ENCODE measurements at regions of chr11 and their contacts with region 1.

Region 1: DNA sequence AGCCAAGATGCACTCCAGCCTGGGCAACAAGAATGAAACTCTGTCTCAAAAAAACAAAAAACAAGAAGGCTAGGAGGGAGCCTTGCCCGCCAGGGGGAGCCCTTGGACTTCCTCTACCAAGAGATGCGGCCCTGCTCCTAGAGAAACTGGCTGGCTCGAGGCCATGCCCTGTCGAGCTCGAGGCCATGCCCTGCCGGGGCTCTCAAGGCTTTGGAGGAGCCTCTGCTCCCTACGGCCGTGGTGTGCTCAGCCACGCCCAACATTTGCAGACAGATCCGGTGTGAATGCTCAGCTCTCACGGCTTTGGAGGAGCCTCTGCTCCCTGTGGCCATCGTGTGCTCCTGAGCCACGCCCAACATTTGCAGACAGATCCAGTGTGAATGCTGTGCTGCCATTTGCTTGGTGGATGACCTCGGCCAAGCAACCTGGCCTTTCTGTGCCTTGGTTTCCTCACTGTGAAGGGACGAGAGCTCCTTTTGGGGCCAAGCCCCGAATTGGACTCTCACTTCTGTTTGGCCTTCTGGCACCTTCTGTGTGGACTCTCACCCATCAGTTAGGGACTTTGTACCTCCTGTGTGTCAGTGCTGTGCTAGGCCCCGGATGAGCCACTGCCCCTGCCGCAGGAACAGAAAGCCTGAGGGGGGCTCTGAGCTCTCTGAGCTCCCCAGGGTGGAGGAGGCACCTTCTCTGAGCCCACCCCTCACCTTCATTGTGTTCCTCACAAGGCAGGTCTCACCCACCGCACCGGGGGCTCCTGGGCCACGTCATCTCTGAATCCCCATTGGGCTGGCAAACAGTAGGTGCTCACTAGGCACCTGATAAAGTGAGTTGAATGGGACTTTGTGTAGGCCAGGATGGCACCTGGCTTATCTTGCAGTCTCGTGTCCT is 14.1 kb downstream of the C11orf24 start:
- DNase-seq: peak; percentile 84 to 92
- ATAC-seq: peak; percentile 77 to 90
- H3K4me3 ChIP-seq: no peak overlapping the region
- H3K27ac ChIP-seq: peak overlapping the region; percentile 54 to 64; a peak in 5 of 6 replicates
- H3K4me1 ChIP-seq: peaks cover 15% of the 10 kb centered on the region
- CTCF ChIP-seq: peak; percentile 88
- EP300 ChIP-seq: no peak
- POLR2A ChIP-seq: no peak
- RAD21 ChIP-seq: peak; percentile 93 to 95

Region 2: GRCh38 chr11:68053117-68053516 is 204.6 kb before region 1 on chr11:
- CTCF ChIA-PET with region 1: no interaction called
- POLR2A ChIA-PET with region 1: no interaction called
- DNase-seq: no peak
- ATAC-seq: peak; percentile 10 to 15; a peak in 3 of 6 replicates
- H3K4me3 ChIP-seq: no peak overlapping the region
- H3K27ac ChIP-seq: no peak overlapping the region
- H3K4me1 ChIP-seq: 0 out of 3 replicates have a peak, but pooled peaks cover 3% of the 10 kb centered on the region
- CTCF ChIP-seq: no peak
- EP300 ChIP-seq: no peak
- POLR2A ChIP-seq: no peak
- RAD21 ChIP-seq: no peak

Region 3: GRCh38 chr11:68235650-68236049 is 22.1 kb before region 1 on chr11:
- CTCF ChIA-PET with region 1: interaction called, 11 read pairs
- POLR2A ChIA-PET with region 1: no interaction called
- DNase-seq: no peak
- ATAC-seq: no peak
- H3K4me3 ChIP-seq: no peak overlapping the region
- H3K27ac ChIP-seq: no peak overlapping the region
- H3K4me1 ChIP-seq: no peaks in the 10 kb centered on the region
- CTCF ChIP-seq: no peak
- EP300 ChIP-seq: no peak
- POLR2A ChIP-seq: no peak
- RAD21 ChIP-seq: no peak

Region 4: GRCh38 chr11:68271781-68272608 is 14.3 kb after region 1 on chr11 and contains the start of gene C11orf24:
- CTCF ChIA-PET with region 1: interaction called, 56 read pairs
- POLR2A ChIA-PET with region 1: interaction called, 13 read pairs
- DNase-seq: peak; percentile 95 to 96
- ATAC-seq: peak; percentile 91 to 96
- H3K4me3 ChIP-seq: peak within 1 kb of the TSS; percentile 87
- H3K27ac ChIP-seq: peak within 1 kb of the TSS; percentile 97 to 98
- H3K4me1 ChIP-seq: peaks cover 33% of the 10 kb centered on the region
- CTCF ChIP-seq: no peak
- EP300 ChIP-seq: no peak
- POLR2A ChIP-seq: peak; percentile 85
- RAD21 ChIP-seq: no peak
- polyA plus RNA-seq, gene C11orf24: 29.4 and 30.6 TPM in 2 replicates

Region 5: DNA sequence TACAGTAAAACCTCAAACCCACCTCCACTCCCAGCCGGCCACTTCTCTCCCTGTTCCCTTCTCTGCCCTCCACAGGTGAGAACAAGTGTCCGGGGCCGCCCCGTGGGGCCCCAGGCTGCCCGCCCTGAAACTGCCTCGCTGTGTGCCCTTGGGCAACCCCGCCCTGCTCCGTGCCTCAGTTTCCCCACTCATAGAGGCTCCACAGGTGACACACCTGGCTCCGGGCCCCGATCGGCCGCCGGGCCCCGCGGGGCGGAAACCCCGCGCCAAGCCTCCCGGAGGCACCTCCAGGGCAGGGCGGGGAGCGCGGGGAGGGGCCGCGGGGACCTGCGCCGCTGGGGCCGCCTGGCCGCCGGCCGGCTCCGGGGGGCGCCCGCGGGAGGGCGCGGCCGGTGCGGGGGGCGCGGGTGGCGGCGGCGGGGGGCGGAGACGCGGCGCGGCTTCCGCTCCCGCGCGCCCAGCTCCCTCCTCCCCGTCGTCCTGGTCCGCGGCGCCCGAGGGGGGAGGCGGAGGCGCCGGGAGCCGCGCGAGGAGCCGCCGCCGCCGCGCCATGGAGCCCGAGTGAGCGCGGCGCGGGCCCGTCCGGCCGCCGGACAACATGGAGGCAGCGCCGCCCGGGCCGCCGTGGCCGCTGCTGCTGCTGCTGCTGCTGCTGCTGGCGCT is 54.5 kb after region 1 on chr11 and contains the start of gene LRP5:
- CTCF ChIA-PET with region 1: interaction called, 11 read pairs
- POLR2A ChIA-PET with region 1: no interaction called
- DNase-seq: no peak
- ATAC-seq: peak in 1 of 2 experiments; percentile 22; a peak in 3 of 6 replicates
- H3K4me3 ChIP-seq: peak within 1 kb of the TSS; percentile 91
- H3K27ac ChIP-seq: peak within 1 kb of the TSS; percentile 90 to 99
- H3K4me1 ChIP-seq: peaks cover 32% of the 10 kb centered on the region
- CTCF ChIP-seq: peak; percentile 8; the same call in 1 of the 3 replicates
- EP300 ChIP-seq: no peak
- POLR2A ChIP-seq: peak; percentile 25; the same call in 1 of the 2 replicates
- RAD21 ChIP-seq: no peak
- polyA plus RNA-seq, gene LRP5: 10.9 and 15.9 TPM in 2 replicates

Region 6: DNA sequence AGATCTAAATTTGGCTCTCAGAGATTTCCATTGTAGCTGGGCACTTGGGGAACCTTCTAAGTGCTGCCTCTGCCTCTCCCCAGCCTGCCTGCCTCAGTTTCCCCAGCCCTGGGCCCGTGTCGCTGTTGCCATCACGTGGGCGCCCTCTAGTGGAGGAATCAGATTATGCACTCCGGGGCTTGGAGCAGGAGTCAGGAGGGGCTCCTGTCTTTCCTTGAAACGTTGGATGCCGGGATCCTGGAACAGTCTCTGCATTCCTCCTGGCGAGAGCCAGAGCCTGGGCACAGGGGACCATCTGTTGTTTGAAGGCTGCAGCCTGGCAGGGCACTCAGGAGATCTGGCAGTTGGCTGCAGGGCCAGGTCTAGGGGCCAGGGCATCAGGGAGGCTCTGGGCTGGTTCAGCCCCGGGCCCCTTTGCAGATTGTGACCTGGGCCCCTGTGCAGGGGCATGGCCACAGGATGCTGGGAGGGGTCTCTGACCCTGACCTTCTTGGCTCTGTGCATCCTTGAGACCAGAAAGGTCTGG is 126.3 kb after region 1 on chr11:
- CTCF ChIA-PET with region 1: interaction called, 81 read pairs
- POLR2A ChIA-PET with region 1: interaction called, 3 read pairs
- DNase-seq: peak; percentile 60 to 62
- ATAC-seq: peak in 1 of 2 experiments; percentile 5; a peak in 2 of 6 replicates
- H3K4me3 ChIP-seq: no peak overlapping the region
- H3K27ac ChIP-seq: peak overlapping the region in 1 of 2 experiments; percentile 44; a peak in 2 of 6 replicates
- H3K4me1 ChIP-seq: peaks cover 43% of the 10 kb centered on the region
- CTCF ChIP-seq: peak; percentile 95
- EP300 ChIP-seq: no peak
- POLR2A ChIP-seq: no peak
- RAD21 ChIP-seq: peak; percentile 94 to 95

Region 7: GRCh38 chr11:68780829-68781228 is 523.1 kb after region 1 on chr11:
- CTCF ChIA-PET with region 1: no interaction called
- POLR2A ChIA-PET with region 1: no interaction called
- DNase-seq: peak in 1 of 2 experiments; percentile 24
- ATAC-seq: peak in 1 of 2 experiments; percentile 77; a peak in 3 of 6 replicates
- H3K4me3 ChIP-seq: no peak overlapping the region
- H3K27ac ChIP-seq: no peak overlapping the region
- H3K4me1 ChIP-seq: no peaks in the 10 kb centered on the region
- CTCF ChIP-seq: no peak
- EP300 ChIP-seq: no peak
- POLR2A ChIP-seq: no peak
- RAD21 ChIP-seq: no peak